Activated CD4-positive, alpha-beta T cell treated with anti-CD3 and anti-CD28 coated beads for 36 hours (primary cell): ENCODE measurements at regions of chr16 and their contacts with region 1.

Region 1: GRCh38 chr16:4402439-4403132 is 13.8 kb downstream of the CORO7 start:
- DNase-seq: peak; percentile 84
- ATAC-seq: peak; percentile 82
- H3K4me3 Mint-ChIP-seq: no peak overlapping the region
- H3K27ac Mint-ChIP-seq: no peak overlapping the region
- H3K4me1 Mint-ChIP-seq: no peaks in the 10 kb centered on the region
- H3K27me3 Mint-ChIP-seq: no peaks in the 10 kb centered on the region

Region 2: GRCh38 chr16:3999479-4000325 is 402.9 kb before region 1 on chr16:
- CTCF ChIA-PET with region 1: no interaction called
- POLR2A ChIA-PET with region 1: no interaction called
- intact Hi-C with region 1: loop called in 1 of 2 experiments (anchors 10 kb)
- DNase-seq: no peak
- ATAC-seq: peak; percentile 36
- H3K4me3 Mint-ChIP-seq: no peak overlapping the region
- H3K27ac Mint-ChIP-seq: no peak overlapping the region
- H3K4me1 Mint-ChIP-seq: peaks cover 13% of the 10 kb centered on the region
- H3K27me3 Mint-ChIP-seq: no peaks in the 10 kb centered on the region

Region 3: GRCh38 chr16:4288148-4288921 is 114.3 kb before region 1 on chr16:
- CTCF ChIA-PET with region 1: interaction called, 8 read pairs
- POLR2A ChIA-PET with region 1: no interaction called
- intact Hi-C with region 1: loop called in 1 of 2 experiments (anchors 5 kb)
- DNase-seq: peak; percentile 87
- ATAC-seq: peak; percentile 95
- H3K4me3 Mint-ChIP-seq: no peak overlapping the region
- H3K27ac Mint-ChIP-seq: no peak overlapping the region
- H3K4me1 Mint-ChIP-seq: peaks cover 9% of the 10 kb centered on the region
- H3K27me3 Mint-ChIP-seq: peaks cover 9% of the 10 kb centered on the region

Region 4: GRCh38 chr16:4319454-4320421 is 82.8 kb before region 1 on chr16:
- CTCF ChIA-PET with region 1: no interaction called
- POLR2A ChIA-PET with region 1: no interaction called
- intact Hi-C with region 1: no loop called
- DNase-seq: peak; percentile 72
- ATAC-seq: peak; percentile 58
- H3K4me3 Mint-ChIP-seq: no peak overlapping the region
- H3K27ac Mint-ChIP-seq: no peak overlapping the region
- H3K4me1 Mint-ChIP-seq: peaks cover 5% of the 10 kb centered on the region
- H3K27me3 Mint-ChIP-seq: peaks cover 3% of the 10 kb centered on the region

Region 5: GRCh38 chr16:4358831-4359561 is 43.6 kb before region 1 on chr16:
- CTCF ChIA-PET with region 1: interaction called, 10 read pairs
- POLR2A ChIA-PET with region 1: no interaction called
- intact Hi-C with region 1: loop called (anchors 1 kb)
- DNase-seq: peak; percentile 81
- ATAC-seq: peak; percentile 75
- H3K4me3 Mint-ChIP-seq: no peak overlapping the region
- H3K27ac Mint-ChIP-seq: no peak overlapping the region
- H3K4me1 Mint-ChIP-seq: no peaks in the 10 kb centered on the region
- H3K27me3 Mint-ChIP-seq: no peaks in the 10 kb centered on the region

Region 6: DNA sequence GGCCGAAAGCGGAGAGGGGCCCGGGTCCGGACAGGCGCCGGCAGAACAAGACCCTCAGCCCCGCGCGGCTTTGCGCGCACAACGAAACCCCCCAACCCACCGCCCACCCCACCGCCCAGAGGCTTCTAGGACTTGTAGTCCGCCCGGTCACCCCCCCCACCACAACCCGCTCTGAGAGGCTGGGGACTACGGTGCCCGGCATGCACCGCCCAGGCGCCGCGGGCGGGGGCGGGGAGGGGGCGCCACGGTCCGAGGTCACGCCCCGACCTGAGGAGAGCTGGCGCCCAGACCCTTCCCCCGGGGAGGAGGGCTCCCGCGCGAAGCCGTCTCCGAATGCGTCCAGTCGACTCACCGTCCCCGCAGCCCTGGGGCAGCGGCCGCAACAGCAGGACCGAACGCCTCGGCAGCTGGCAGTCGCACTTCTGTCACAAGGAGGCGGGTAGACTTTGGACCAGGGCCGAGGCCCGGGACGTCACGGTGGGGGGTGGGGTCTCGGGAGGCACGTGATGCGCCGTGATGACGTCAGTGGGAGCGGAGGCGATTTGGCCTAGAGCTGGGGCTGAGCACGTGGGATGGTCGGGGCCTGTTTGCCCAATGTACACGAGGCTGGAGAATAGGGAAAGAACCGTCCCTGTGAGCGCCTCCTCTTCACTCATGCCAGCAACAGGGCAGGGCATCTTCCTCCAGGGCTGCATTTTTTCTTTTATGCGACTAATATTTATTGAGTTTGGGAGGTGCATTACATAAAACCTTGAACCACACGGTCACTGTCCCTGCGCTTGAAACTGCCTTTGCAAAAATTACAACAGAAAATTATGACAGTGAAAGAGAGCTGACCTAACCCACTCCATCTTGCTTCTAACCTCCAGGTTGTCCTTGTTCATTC is 136.0 kb after region 1 on chr16 and contains the start of gene CDIP1:
- CTCF ChIA-PET with region 1: no interaction called
- POLR2A ChIA-PET with region 1: no interaction called
- intact Hi-C with region 1: no loop called
- DNase-seq: peak; percentile 99
- ATAC-seq: peak; percentile 81
- H3K4me3 Mint-ChIP-seq: peak within 1 kb of the TSS; percentile 75
- H3K27ac Mint-ChIP-seq: peak within 1 kb of the TSS; percentile 63
- H3K4me1 Mint-ChIP-seq: peaks cover 41% of the 10 kb centered on the region
- H3K27me3 Mint-ChIP-seq: no peaks in the 10 kb centered on the region
- total RNA-seq, gene CDIP1: 28.3 to 30.2 TPM

Region 7: GRCh38 chr16:4601036-4601863 is 198.7 kb after region 1 on chr16:
- CTCF ChIA-PET with region 1: no interaction called
- POLR2A ChIA-PET with region 1: no interaction called
- intact Hi-C with region 1: no loop called
- DNase-seq: no peak
- ATAC-seq: no peak
- H3K4me3 Mint-ChIP-seq: no peak overlapping the region
- H3K27ac Mint-ChIP-seq: no peak overlapping the region
- H3K4me1 Mint-ChIP-seq: no peaks in the 10 kb centered on the region
- H3K27me3 Mint-ChIP-seq: peaks cover 2% of the 10 kb centered on the region